ENCODE measurements at regions of chr7 and their contacts with region 1.

Region 1: GRCh38 chr7:130069978-130070860 is at the start of gene KLHDC10:
- DNase-seq: peak; percentile 97 to 98 (median 98)
- ATAC-seq: peak; percentile 98 to 100 (median 99)
- H3K4me3 ChIP-seq: peak within 1 kb of the TSS; percentile 74 to 98 (median 84)
- H3K27ac ChIP-seq: peak within 1 kb of the TSS; percentile 45 to 92 (median 87)
- H3K4me1 ChIP-seq: peaks cover 5 to 42% (median 22%) of the 10 kb centered on the region in 12 donors
- H3K27me3 ChIP-seq: no peaks in the 10 kb centered on the region
- CTCF ChIP-seq: peak in 1 of 12 donors; percentile 26
- POLR2A ChIP-seq: peak in 1 of 2 donors; percentile 66
- total RNA-seq, gene KLHDC10: 17.2 to 32.6 (median 26.5) TPM

Region 2: DNA sequence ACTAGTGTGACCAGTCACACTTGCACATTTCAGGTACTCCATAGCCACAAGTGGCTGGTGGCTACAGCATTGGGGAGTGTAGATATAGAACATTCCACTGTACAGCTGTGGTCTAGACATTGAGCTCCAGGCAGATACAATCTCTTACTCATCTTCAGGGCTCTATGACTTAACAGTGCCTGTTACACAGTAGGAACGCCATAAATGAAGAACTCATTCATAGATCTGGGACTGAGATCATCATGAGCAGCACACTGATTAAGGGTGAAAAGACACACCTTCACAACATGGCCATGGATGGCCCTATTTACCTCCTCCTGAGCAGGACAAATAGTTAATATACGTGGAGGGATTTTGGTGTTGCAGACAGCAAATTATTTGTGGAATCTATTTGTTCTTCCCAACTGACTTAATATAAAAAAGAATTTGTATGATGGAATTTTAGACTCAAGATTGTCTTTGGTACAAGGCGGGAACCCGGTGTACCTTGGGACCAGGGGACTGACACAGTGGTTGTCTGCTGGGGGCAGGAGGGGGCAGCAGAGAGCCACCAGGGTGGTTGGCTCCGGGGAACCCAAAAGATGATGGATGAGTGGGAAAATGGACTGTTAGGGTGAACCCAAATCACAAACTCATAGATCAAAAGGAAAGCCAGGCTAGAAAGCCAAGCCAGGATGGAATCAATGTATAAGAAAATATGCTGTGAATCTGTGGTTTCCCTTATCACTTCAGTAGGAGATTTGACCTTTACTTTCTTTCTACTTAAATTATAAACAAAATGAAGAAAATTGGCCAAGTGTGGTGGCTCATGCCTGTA is 172.2 kb after region 1 on chr7:
- intact Hi-C with region 1: no loop called
- DNase-seq: peak; percentile 44 to 71 (median 51)
- ATAC-seq: peak in 3 of 4 donors; percentile 77 to 85 (median 80)
- H3K4me3 ChIP-seq: no peak overlapping the region
- H3K27ac ChIP-seq: no peak overlapping the region
- H3K4me1 ChIP-seq: peaks cover 0 to 11% (median 0%) of the 10 kb centered on the region in 12 donors
- H3K27me3 ChIP-seq: no peaks in the 10 kb centered on the region
- CTCF ChIP-seq: peak; percentile 66 to 89 (median 75)
- POLR2A ChIP-seq: no peak

Region 3: DNA sequence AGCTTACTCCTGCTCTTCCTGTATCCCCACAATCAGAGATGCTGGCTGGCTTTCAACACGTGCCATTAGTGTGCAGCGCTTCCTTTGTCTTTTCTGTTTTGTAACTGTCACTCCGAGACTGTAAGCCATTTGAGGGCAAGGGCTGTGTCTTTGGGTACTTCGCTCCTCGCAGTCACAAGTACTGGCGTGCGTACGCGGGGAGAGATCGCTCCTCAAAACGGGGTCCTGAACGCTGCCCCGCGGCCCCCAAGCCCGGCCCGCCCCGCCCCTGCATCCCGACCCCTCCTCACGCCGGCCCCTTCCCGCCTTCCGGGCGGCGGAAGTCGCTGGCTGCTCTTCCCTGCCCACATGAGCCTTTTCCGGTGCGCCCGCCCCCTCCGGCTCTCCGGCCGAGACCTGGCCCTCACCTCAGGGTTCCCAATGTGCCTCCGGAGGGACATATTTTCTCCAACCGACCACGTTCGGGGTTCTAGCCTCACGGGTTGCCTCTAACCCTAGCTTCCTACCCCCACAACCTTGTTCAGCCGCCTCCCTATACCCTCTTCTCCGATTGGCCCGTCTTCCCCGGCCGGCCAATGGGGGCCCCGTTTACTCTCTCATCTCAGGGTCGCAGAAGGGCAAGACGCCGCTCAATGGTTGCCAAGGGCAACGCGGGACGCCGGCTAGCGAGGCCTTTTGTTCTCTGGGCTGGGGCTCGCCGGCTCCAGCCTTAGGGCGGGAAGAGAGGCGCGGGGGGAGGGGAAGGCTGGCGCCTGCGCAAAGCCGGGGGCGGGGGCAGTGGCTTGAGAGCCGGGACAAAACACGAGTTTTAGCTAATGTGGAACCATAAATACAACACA is 370.5 kb after region 1 on chr7 and contains the start of gene CEP41:
- intact Hi-C with region 1: loop called in 1 of 10 experiments (anchors 5 kb)
- DNase-seq: peak; percentile 97 to 99 (median 99)
- ATAC-seq: peak; percentile 98 to 100 (median 100)
- H3K4me3 ChIP-seq: peak within 1 kb of the TSS; percentile 21 to 89 (median 79)
- H3K27ac ChIP-seq: peak within 1 kb of the TSS; percentile 33 to 95 (median 87)
- H3K4me1 ChIP-seq: peaks cover 0 to 18% (median 9%) of the 10 kb centered on the region in 12 donors
- H3K27me3 ChIP-seq: no peaks in the 10 kb centered on the region
- CTCF ChIP-seq: no peak
- POLR2A ChIP-seq: peak in 1 of 2 donors; percentile 22
- total RNA-seq, gene CEP41: 1.9 to 11.4 (median 4.1) TPM

Region 4: DNA sequence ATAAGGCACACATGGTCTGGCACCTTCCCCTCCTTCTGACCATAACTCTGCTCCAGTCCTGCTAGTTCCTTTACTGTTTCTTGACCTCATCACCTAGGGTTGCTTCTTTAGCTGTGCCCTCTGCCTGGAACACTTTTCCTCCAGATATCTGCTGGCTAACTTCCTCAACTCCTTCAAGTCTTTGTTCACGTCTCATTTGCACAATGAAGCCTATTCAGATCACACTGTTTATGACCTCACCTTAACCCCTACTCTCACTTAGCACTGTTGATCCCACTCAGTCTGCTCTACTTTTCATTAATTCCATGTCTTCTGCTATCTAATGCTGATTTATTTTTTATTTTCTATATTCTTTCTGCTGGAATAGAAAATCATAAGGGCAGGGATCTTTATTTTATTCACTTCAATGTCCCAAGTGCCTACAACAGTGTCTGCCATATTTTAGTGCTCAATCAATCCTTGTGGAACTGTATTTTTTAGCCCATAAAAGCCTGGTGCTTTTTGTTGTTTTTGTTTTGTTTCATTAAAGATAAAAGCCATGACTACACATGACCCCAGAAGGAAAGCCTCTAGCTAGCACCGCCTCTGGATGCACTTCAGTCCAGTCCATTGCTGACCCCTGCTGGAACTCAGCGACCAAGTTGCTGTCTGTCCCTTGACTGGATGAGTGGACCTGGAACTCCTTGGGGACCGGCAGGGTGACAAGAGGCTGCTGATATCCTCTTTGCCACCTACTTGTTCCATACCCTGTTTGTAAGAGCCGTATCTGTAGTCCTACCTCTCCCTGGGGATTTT is 651.5 kb after region 1 on chr7:
- intact Hi-C with region 1: loop called in 9 of 10 experiments (anchors 5 to 10 kb)
- DNase-seq: peak; percentile 69 to 84 (median 79)
- ATAC-seq: peak; percentile 87 to 98 (median 95)
- H3K4me3 ChIP-seq: no peak overlapping the region
- H3K27ac ChIP-seq: no peak overlapping the region
- H3K4me1 ChIP-seq: peaks cover 0 to 7% (median 0%) of the 10 kb centered on the region in 12 donors
- H3K27me3 ChIP-seq: peaks cover 0 to 15% (median 0%) of the 10 kb centered on the region in 9 donors
- CTCF ChIP-seq: peak; percentile 48 to 85 (median 76)
- POLR2A ChIP-seq: no peak

Region 5: GRCh38 chr7:130822642-130823041 is 752.4 kb after region 1 on chr7:
- intact Hi-C with region 1: loop called in 1 of 10 experiments (anchors 10 kb)
- DNase-seq: no peak
- ATAC-seq: no peak
- H3K4me3 ChIP-seq: no peak overlapping the region
- H3K27ac ChIP-seq: no peak overlapping the region
- H3K4me1 ChIP-seq: no peaks in the 10 kb centered on the region
- H3K27me3 ChIP-seq: no peaks in the 10 kb centered on the region
- CTCF ChIP-seq: no peak
- POLR2A ChIP-seq: no peak

Measured in heart left ventricle (tissue), 16 donors.